ENCODE measurements at regions of chr11 and their contacts with region 1.

Region 1: DNA sequence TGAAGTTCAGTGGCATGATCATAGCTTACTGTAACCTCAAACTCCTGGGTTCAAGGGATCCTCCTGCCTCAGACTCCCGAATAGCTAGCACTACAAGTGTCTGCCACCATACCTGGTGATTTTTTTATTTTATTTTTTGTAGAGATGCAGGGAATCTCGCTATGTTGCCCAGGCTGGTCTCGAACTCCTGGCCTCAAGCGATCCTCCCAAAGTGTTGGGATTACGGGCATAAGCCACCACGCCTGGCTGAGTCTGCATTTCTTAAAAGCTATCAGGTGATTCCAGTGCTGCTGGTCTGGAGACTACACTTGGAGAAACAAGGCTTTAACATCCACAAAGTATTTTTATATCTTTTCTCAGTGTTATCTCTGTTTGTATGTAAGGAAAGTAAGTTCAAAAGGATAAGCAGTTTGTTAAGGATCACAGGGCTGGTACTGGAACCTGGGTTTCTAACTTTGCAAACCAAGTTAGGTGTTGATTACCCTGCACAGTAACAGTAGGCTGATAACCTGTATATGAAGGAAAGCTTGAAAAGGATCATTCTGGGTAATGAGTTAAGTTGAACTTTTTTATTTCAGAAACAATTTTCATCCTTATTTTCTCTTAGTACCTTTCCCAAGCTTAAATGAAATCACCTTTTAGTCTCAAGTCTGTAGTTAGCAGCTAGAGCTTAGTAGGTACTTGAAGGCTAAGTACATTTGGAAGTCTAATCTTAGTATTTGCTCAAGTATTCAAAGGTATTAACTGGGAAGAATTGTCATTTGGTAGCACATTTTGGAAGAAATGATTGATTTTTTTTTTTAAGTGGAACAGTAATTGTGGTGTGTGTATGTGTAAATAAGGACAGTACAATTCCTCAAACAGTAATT is 12.5 kb downstream of the ACER3 start:
- DNase-seq: no peak
- H3K27ac ChIP-seq: no peak overlapping the region
- CTCF ChIP-seq: no peak

Region 2: DNA sequence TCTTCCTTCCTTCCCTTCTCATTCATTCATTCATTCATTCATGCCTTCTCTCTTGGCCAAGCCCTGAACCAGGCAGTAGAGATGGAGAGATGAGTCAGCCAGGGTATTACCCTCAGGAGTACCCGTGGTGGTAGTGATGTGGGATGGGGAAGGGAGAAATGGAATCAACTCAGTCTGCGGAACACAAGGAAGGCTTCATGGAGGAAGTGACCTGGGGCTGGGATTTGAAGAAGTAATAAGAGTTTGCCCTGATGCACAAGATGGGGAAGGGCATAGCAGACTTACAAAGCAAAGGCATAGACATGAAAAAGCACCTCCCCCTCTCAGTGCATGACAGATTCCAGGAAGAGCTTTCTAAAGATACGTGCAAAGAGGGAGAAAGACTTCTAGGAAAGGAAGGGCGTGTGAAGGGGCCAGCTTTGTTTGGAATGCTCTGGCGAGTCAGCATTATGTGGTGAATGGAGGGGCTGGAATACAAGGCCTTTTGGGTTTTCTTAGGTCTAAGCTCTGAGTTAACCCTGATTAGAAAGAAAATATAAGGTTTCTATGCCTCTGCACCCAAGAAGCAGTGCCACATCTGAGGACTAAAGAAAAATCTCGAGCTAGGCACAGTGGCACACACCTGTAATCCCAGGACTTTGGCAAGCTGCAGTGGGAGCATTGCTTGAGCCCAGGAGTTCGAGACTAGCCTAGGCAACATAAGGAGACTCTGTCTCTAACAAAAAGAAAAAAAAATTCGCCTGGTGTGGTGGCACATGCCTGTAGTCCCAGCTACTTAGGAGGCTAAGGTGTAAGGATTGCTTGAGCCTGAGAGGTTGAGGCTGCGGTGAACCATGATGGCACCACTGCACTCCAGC is 48.9 kb before region 1 on chr11:
- CTCF ChIA-PET with region 1: no interaction called
- POLR2A ChIA-PET with region 1: interaction called, 11 read pairs
- DNase-seq: peak; percentile 48
- H3K27ac ChIP-seq: peak overlapping the region; percentile 93
- CTCF ChIP-seq: no peak

Measured in RWPE1 (cell line).